ENCODE measurements at regions of chrX and their contacts with region 1.

Region 1: GRCh38 chrX:50680990-50681389 is 133.0 kb downstream of the SHROOM4 start:
- DNase-seq: no peak
- CTCF ChIP-seq: no peak

Region 2: DNA sequence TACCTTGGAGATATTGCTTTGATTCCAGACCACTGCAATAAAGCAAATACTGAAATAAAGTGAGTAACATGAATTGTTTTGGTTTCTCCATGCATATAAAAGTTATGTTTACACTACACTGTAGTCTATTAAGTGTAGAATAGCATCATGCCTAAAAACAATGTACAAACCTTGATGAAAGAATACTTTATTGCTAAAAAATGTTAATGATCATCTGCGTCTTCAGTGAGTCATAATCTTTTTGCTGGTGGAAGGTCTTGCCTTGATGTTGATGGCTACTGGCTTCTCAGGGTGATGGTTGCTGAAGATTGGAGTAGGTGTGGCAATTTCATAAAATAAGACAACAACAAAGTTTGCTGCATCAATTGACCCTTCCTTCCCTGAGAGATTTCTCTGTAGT is 12.1 kb before region 1 on chrX:
- CTCF ChIA-PET with region 1: no interaction called
- POLR2A ChIA-PET with region 1: no interaction called
- DNase-seq: no peak
- CTCF ChIP-seq: no peak

Region 3: DNA sequence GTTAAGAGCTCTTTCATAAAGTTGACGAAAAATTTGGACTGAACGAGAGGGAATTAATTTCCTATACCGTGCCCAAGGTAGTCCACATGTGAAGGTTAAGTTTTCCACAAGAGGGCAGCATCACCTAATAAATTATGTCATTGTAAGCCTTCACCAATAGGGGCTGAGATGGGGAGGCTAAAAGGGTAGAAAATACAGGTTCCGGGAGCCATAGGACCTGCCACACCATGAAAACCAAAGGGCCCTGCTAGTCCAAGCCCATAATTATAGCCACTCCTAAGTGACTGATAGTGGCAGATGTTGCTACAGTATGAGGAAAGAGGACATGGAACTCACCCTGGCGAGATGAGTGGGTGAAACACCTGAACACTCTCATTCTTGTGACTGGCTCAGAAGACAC is 10.8 kb after region 1 on chrX:
- CTCF ChIA-PET with region 1: interaction called, 14 read pairs
- POLR2A ChIA-PET with region 1: no interaction called
- DNase-seq: peak; percentile 34
- CTCF ChIP-seq: peak; percentile 40

Region 4: GRCh38 chrX:50697691-50698090 is 16.7 kb after region 1 on chrX:
- CTCF ChIA-PET with region 1: interaction called, 10 read pairs
- POLR2A ChIA-PET with region 1: no interaction called
- DNase-seq: no peak
- CTCF ChIP-seq: no peak